ENCODE measurements at regions of chr4 and their contacts with region 1.

Region 1: DNA sequence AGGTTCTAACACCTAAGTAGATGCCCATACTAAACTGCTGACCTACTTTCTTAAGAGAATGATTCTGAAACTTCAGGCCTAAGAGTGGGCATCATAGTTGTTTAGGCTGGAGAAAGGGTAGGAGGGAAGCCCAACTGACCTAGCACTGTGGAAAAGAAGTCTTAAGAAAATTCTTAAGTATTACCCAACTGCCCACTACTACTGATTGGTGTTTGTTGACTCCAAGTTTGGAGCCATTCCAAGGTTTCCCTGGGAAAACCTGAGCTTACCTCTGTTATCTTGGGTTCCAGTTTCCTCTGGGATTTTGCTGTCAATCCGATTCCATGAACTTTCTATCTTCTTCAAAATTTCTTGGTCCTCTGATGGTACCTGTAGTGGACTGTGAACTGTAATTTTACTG is 23.9 kb downstream of the ANKRD17 start:
- DNase-seq: no peak
- ATAC-seq: no peak
- H3K4me3 ChIP-seq: no peak overlapping the region
- H3K27ac ChIP-seq: no peak overlapping the region
- H3K4me1 ChIP-seq: peaks cover 10% of the 10 kb centered on the region
- H3K27me3 ChIP-seq: no peaks in the 10 kb centered on the region
- CTCF ChIP-seq: no peak
- EP300 ChIP-seq: no peak
- POLR2A ChIP-seq: no peak
- RAD21 ChIP-seq: no peak

Region 2: GRCh38 chr4:72875138-72875537 is 359.6 kb before region 1 on chr4:
- CTCF ChIA-PET with region 1: no interaction called
- POLR2A ChIA-PET with region 1: no interaction called
- in situ Hi-C with region 1: no loop called
- intact Hi-C with region 1: no loop called
- DNase-seq: no peak
- ATAC-seq: no peak
- H3K4me3 ChIP-seq: no peak overlapping the region
- H3K27ac ChIP-seq: no peak overlapping the region
- H3K4me1 ChIP-seq: no peaks in the 10 kb centered on the region
- H3K27me3 ChIP-seq: no peaks in the 10 kb centered on the region
- CTCF ChIP-seq: no peak
- EP300 ChIP-seq: no peak
- POLR2A ChIP-seq: no peak
- RAD21 ChIP-seq: no peak

Region 3: DNA sequence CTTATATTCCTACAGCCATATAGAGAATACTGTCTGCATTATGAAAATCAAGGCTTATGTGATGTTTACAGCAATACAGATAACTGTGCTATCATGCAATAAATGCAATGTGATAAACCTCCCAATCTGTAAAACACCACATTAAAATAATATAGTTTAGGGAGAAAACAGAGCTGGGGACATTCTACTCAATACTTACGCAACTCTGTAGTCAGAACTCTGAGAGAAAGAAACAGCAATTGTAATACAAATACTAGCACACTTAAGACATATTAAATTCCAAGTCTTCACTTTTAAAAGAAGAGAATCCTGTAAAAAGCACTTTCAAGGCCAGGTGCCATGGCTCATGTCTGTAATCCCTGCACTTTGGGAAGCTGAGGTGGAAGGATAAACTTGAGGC is 37.5 kb before region 1 on chr4:
- CTCF ChIA-PET with region 1: no interaction called
- POLR2A ChIA-PET with region 1: no interaction called
- in situ Hi-C with region 1: no loop called
- intact Hi-C with region 1: loop called (anchors 5 kb)
- DNase-seq: no peak
- ATAC-seq: no peak
- H3K4me3 ChIP-seq: no peak overlapping the region
- H3K27ac ChIP-seq: no peak overlapping the region
- H3K4me1 ChIP-seq: no peaks in the 10 kb centered on the region
- H3K27me3 ChIP-seq: no peaks in the 10 kb centered on the region
- CTCF ChIP-seq: no peak
- EP300 ChIP-seq: no peak
- POLR2A ChIP-seq: no peak
- RAD21 ChIP-seq: no peak